H1 (cell line): ENCODE measurements at regions of chr17 and their contacts with region 1.

Region 1: GRCh38 chr17:9291912-9292560 is 270.7 kb downstream of the NTN1 start:
- DNase-seq: peak in 1 of 2 experiments; percentile 66
- H3K4me3 ChIP-seq: no peak overlapping the region
- H3K27ac ChIP-seq: no peak overlapping the region
- H3K4me1 ChIP-seq: peaks cover 0 to 4% (median under 1%) of the 10 kb centered on the region in 4 experiments; a peak in 2 of 7 replicates
- H3K27me3 ChIP-seq: no peaks in the 10 kb centered on the region
- CTCF ChIP-seq: peak; percentile 65 to 84 (median 75)
- EP300 ChIP-seq: no peak
- POLR2A ChIP-seq: no peak
- RAD21 ChIP-seq: peak; percentile 77 to 83

Region 2: DNA sequence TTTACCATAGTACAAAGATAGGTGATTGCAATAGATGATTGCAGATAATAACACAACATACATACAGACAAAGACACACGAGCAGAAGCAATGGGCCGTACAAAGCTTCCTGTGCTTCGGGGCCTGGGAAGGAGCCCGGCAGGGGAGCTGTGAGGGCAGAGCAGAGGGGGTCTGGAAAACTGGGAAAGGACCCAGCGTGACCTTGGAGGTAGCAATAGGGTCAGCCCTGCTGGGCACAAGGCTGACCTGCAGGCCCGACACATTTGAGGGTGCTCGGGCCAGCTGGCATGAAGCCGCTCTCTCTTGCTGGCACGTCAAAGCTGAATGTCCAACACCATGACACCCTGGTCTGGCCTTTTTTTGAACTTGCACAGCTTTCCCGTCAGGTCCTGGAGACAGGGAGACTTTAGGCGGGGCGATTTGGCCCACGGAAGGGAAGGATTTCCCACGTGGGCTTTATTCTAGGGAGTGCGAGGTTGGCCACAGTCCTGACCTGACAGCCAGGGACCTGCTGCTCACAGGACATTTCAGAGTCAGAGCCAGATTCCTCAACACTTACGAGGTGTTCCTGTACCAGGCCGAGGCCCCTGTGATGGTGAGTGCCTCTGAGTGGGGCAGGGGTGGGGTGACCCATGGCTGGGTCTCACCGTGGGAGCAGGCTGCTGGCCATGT is 187.5 kb before region 1 on chr17:
- CTCF ChIA-PET with region 1: no interaction called
- POLR2A ChIA-PET with region 1: no interaction called
- DNase-seq: no peak
- H3K4me3 ChIP-seq: no peak overlapping the region
- H3K27ac ChIP-seq: no peak overlapping the region
- H3K4me1 ChIP-seq: peaks cover 0 to 5% (median 0%) of the 10 kb centered on the region in 4 experiments; a peak in 3 of 7 replicates
- H3K27me3 ChIP-seq: no peaks in the 10 kb centered on the region
- CTCF ChIP-seq: no peak
- EP300 ChIP-seq: no peak
- POLR2A ChIP-seq: no peak
- RAD21 ChIP-seq: no peak

Region 3: DNA sequence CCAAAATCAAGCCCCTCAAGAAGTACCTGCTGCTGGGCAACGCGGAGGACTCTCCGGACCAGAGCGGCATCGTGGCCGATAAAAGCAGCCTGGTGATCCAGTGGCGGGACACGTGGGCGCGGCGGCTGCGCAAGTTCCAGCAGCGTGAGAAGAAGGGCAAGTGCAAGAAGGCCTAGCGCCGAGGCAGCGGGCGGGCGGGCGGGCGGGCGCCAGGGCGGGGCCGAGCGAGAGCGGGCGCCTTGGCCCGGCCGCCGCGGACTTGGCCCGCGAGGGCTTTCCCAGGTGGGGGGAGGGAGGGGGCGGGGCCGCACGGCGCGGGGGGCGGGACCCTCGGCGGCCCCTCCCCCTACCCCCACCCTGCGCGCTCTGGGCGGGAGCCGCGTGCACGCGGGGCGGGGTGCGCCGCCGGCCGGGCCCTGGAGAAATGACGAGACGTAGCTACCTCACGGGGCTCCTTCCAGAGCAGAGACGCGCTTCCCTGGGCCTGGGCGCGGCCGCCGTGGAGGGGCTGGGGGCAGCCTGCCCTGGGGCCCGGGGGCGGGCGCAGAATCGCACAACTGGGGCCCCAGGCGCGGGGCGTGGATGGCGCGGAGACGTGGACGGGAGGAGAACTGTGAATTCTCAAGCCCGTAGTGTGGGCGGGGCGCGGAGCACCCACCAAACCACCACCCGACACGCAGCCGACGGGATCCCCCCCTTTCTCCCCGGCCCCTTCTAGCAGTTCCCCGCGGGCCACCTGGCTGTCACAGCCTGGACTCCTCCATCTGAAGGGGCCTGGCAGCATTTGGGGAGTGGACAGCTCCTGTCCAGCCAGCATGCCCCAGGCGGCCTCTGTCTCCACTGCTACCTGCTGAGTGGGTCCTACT is 52.0 kb before region 1 on chr17:
- CTCF ChIA-PET with region 1: interaction called, 10 read pairs
- POLR2A ChIA-PET with region 1: no interaction called
- DNase-seq: peak in 1 of 2 experiments; percentile 71
- H3K4me3 ChIP-seq: peak overlapping the region; percentile 27 to 66 (median 44)
- H3K27ac ChIP-seq: no peak overlapping the region
- H3K4me1 ChIP-seq: peaks cover 3 to 26% (median 18%) of the 10 kb centered on the region in 4 experiments
- H3K27me3 ChIP-seq: peaks cover 0 to 14% (median 9%) of the 10 kb centered on the region in 4 experiments; a peak in 6 of 7 replicates
- CTCF ChIP-seq: no peak
- EP300 ChIP-seq: no peak
- POLR2A ChIP-seq: no peak
- RAD21 ChIP-seq: no peak

Region 4: DNA sequence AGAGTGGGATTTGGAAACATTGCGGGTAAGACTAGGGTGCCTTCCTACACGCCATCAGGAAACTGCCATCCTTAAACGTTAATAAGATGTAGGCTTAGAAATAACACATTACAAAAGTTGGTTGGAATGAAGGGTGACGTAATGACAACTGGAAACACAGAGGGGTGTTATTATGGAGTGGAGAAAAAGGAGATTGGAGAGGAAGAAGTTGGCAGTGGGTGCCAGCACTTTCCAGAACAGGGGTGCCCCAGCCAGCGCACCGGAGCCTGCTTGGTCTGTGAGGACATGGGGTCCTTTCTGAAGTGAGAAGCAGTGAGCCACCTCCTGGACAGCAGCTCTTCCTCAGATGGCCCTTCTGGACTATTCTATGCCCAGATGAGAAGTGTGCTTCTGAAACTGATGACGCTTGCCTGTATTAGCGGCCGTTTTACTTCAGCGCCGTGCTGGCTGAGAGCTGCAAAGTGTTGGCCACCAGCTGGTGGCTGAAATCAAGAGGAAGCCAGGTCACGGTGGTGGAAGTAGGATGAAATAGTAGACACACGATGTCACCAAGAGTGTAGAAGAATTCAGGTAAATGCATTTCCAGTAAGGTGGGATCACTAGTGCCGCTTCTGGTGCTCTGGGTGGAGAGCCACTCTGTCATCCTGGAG is 25.9 kb before region 1 on chr17:
- CTCF ChIA-PET with region 1: interaction called, 30 read pairs
- POLR2A ChIA-PET with region 1: no interaction called
- DNase-seq: no peak
- H3K4me3 ChIP-seq: no peak overlapping the region
- H3K27ac ChIP-seq: no peak overlapping the region
- H3K4me1 ChIP-seq: no peaks in the 10 kb centered on the region
- H3K27me3 ChIP-seq: peaks cover 0 to 2% (median 0%) of the 10 kb centered on the region in 4 experiments; a peak in 2 of 7 replicates
- CTCF ChIP-seq: no peak
- EP300 ChIP-seq: no peak
- POLR2A ChIP-seq: no peak
- RAD21 ChIP-seq: no peak

Region 5: DNA sequence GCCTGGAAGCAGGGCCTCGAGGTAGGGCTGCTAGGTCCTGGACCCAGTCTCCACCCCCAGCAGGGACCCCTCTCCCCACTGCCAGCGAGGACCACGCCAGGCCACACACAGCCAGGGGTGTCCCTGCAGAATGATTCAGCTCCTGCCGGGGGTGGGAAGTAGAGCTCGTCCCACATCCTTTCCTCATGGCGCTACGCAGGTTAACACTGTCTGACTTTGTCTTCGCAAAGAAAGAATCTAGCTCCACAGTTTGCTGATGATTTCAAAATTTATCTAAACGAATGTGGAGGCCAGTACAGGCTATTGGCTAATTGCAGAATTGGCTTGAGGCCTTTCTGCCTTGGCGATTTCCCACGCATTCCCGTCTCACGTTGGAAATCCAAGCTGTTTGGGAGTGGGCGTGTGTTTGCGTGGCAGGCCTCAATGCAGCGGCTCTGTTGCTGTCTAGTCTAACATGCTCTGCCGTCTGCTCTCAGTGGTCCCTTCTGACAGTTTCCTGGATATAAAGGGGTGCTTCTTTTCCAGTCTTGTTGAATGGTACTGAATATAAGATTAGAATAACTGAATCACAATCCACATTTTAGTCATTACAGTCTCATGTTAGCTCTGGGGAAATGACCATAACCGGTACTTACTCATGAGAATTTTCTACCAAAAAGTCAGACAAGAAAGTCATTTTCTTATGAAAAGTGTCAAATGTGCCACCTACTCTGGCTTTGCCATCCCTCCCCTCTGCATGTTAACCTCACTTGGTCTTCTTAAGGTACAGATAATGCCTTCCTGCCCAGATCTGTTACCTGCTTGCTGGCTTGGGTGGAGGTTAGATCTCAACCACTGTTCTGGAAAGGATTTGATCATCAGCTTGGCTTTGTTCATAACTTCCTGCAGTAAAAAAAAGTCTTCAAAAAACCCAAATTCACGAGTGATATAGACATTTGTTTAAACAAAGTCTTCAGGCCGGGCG is 18.3 kb before region 1 on chr17:
- CTCF ChIA-PET with region 1: interaction called, 30 read pairs
- POLR2A ChIA-PET with region 1: no interaction called
- DNase-seq: no peak
- H3K4me3 ChIP-seq: no peak overlapping the region
- H3K27ac ChIP-seq: no peak overlapping the region
- H3K4me1 ChIP-seq: peaks cover 0 to 5% (median 2%) of the 10 kb centered on the region in 4 experiments; a peak in 1 of 7 replicates
- H3K27me3 ChIP-seq: no peaks in the 10 kb centered on the region
- CTCF ChIP-seq: no peak
- EP300 ChIP-seq: no peak
- POLR2A ChIP-seq: no peak
- RAD21 ChIP-seq: no peak

Region 6: DNA sequence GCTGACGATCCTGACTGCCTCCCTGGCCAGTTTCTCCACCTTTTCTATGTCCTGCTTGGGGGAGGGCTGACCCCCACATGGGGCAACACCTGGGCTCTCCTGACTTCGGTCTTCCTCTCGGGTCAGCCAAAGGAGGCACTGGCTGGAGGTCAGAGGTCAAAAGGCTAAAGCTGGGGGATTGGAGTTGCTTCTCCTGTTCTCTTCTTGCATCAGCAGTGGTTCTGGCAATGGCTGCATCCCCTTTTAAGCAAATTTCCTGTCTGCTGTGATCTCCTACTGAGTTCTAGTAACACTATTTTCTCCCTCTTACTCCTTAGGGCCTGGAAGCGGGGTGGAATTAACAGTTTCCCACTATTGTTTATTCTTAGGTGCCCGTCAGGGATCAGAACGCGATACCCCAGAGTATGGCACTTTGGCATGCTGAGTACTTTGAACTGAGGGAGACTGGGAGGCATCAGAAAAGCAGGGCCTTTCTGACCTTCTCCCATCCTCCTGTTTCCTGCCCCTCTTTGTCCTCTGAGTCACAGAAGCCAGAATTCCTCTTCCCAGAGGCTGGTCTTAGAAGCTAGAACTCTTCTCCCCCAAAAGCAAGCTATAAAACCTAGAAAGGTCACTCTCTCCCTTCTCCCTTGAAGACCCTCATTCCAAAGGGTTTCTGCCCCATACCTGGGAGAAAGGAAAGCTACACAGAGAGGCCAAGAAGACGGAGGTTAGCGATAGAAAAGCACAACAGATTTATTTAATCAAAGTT is 15.4 kb after region 1 on chr17:
- CTCF ChIA-PET with region 1: interaction called, 10 read pairs
- POLR2A ChIA-PET with region 1: interaction called, 3 read pairs
- DNase-seq: no peak
- H3K4me3 ChIP-seq: no peak overlapping the region
- H3K27ac ChIP-seq: no peak overlapping the region
- H3K4me1 ChIP-seq: peaks cover 4 to 10% (median 5%) of the 10 kb centered on the region in 4 experiments; a peak in 5 of 7 replicates
- H3K27me3 ChIP-seq: no peaks in the 10 kb centered on the region
- CTCF ChIP-seq: no peak
- EP300 ChIP-seq: no peak
- POLR2A ChIP-seq: no peak
- RAD21 ChIP-seq: no peak

Region 7: GRCh38 chr17:9522074-9522473 is 230.0 kb after region 1 on chr17:
- CTCF ChIA-PET with region 1: interaction called, 10 read pairs
- POLR2A ChIA-PET with region 1: no interaction called
- DNase-seq: no peak
- H3K4me3 ChIP-seq: no peak overlapping the region
- H3K27ac ChIP-seq: no peak overlapping the region
- H3K4me1 ChIP-seq: peaks cover 0 to 8% (median 3%) of the 10 kb centered on the region in 4 experiments; a peak in 3 of 7 replicates
- H3K27me3 ChIP-seq: no peaks in the 10 kb centered on the region
- CTCF ChIP-seq: peak in 2 of 3 experiments; percentile 64 to 71; a peak in 3 of 4 replicates
- EP300 ChIP-seq: no peak
- POLR2A ChIP-seq: no peak
- RAD21 ChIP-seq: peak; percentile 85 to 88